Left colon (tissue), 2 donors: ENCODE measurements at regions of chr14 and their contacts with region 1.

Region 1: DNA sequence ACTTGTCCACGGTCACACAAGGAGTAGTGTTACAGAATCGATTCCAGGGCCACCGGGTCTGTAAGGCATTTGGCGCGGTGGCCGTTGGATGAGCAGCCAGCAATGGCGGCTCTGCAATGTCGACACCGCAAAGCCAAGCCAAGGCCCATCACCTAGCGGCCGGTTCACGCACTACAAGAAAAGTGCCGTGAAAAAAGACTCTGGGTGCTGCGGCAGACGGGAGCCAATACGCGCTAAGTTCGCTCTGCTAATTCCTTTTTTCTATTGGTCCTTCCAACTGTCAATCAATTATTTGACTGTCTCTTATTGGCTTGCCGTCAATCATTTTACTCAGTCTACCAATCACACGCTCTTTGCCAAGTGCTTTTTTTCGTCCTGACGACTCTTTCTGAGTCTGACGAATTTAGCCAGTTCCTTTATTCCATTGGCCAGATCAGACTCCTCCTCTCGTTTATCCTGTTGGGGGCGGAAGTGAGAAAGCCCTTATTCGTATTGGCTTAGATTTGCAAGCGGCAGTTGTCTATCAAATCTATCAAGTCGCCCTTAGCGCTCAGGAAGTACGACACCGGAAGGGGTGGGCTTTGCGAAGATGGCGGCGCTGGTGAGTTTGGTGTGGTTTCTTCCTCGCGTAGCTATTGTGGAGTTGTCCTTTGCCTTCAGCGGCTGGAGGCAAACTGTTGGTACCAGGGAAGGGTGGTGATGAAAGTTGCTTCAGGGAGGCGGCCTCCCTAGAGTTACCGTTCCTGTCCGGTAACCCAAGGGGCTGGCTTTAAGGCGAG is at the start of gene NGDN:
- DNase-seq: peak; percentile 91 to 95
- ATAC-seq: peak; percentile 95
- total RNA-seq, gene NGDN: 22.2 to 24.1 TPM

Region 2: DNA sequence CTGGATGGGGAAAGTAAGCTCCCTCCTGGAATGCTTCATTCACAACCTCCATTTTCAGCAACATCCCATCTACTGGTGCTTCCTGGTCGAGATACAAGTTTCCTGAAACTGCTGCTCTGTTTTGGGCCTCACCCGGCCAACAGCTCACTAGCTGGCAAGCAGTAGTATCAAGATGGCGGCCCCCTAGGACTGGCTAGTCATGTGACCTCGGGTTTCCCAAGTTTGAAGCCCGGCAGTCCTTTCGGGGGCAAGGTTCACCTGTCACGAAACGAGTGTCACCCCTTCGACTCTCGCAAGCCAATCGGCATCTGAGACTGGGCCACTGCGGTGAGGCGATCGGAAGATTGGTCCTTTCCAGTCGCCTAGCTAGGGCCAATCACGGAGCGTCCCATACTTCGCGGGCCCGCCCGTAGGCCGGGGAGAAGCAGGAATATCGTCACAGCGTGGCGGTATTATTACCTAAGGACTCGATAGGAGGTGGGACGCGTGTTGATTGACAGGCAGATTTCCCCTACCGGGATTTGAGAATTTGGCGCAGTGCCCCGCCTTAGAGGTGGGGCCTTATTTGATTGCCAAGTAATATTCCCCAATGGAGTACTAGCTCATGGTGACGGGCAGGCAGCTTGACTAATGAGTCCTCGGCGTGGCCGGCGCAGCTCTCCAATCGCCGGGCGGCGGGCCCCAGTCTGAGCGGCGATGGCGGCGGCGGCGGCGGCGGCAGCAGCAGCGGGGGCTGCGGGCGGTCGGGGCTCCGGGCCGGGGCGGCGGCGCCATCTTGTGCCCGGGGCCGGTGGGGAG is 148.3 kb before region 1 on chr14 and contains the start of gene PABPN1:
- intact Hi-C with region 1: loop called in 1 of 2 experiments (anchors 10 kb)
- DNase-seq: peak; percentile 99
- ATAC-seq: peak; percentile 85
- total RNA-seq, gene PABPN1: 131 to 158 TPM